ENCODE measurements at regions of chr5 and their contacts with region 1.

Region 1: GRCh38 chr5:132963175-132964104 is at the start of gene AFF4:
- DNase-seq: peak; percentile 95 to 98 (median 97)
- H3K4me3 ChIP-seq: peak within 1 kb of the TSS; percentile 85 to 93 (median 86)
- H3K4me3 Mint-ChIP-seq: peak within 1 kb of the TSS; percentile 90 to 97
- H3K27ac ChIP-seq: peak within 1 kb of the TSS; percentile 97 to 99
- H3K27ac Mint-ChIP-seq: peak within 1 kb of the TSS; percentile 94 to 99 (median 97)
- H3K4me1 ChIP-seq: peaks cover 21 to 28% of the 10 kb centered on the region in 2 donors
- H3K4me1 Mint-ChIP-seq: peaks cover 30% of the 10 kb centered on the region
- H3K27me3 ChIP-seq: no peaks in the 10 kb centered on the region
- H3K27me3 Mint-ChIP-seq: no peaks in the 10 kb centered on the region
- CTCF ChIP-seq: no peak
- polyA plus RNA-seq, gene AFF4: 9.7 to 17.7 (median 17.6) TPM

Region 2: DNA sequence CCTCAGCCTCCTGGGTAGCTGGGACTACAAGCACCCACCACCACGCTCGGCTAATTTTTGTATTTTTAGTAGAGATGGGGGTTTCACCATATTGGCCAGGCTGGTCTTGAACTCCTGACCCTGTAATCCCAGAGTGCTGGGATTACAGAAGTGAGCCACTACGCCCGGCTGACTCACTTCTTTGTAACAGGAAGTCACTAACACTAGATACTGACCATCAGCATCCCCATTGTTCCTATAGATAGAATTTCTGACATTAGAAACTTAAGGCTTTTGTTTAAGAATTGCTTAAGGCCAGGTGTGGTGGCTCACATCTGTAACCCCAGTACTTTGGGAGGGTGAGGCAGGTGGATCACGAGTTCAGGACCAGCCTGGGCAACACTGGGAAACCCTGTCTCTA is 47.8 kb before region 1 on chr5:
- intact Hi-C with region 1: loop called in 1 of 2 experiments (anchors 10 kb)
- DNase-seq: peak; percentile 53 to 55 (median 53)
- H3K4me3 ChIP-seq: no peak overlapping the region
- H3K4me3 Mint-ChIP-seq: no peak overlapping the region
- H3K27ac ChIP-seq: peak overlapping the region in 1 of 2 donors; percentile 1
- H3K27ac Mint-ChIP-seq: peak overlapping the region in 6 of 7 donors; percentile 48 to 82 (median 70)
- H3K4me1 ChIP-seq: peaks cover 3 to 8% of the 10 kb centered on the region in 2 donors
- H3K4me1 Mint-ChIP-seq: peaks cover 10% of the 10 kb centered on the region
- H3K27me3 ChIP-seq: no peaks in the 10 kb centered on the region
- H3K27me3 Mint-ChIP-seq: no peaks in the 10 kb centered on the region
- CTCF ChIP-seq: no peak

Region 3: DNA sequence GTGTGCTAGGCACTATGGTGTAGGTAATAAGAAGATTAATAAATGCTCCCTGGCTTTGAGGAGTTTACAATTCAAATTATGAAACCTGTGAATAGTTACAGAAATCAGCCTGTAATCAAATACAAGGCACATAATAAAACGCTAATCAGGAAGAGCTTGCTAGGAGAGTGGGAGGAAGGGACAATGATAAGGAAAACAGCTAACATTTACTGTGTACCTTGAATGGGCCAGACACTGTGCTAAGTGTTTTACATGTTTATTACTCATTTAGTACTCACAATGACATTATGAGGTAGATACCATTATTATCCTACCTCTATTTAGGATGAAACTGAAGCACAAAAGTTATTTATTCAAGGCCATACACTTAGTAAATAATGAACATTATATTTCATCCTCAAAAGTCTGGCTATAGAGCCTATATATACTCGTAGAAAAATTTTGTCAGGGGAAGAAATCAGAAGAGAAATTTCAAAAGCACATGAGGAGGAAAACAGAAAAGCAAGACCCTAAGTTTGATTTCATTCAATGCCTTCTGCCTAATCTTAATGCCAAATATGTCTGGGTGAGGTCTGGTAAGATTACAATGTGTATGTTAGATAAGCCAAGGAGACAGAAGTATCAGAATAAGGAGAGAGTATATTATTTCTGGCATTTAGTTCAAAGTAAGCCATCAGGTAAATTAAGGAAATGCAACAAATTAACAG is 35.9 kb before region 1 on chr5:
- intact Hi-C with region 1: no loop called
- DNase-seq: no peak
- H3K4me3 ChIP-seq: no peak overlapping the region
- H3K4me3 Mint-ChIP-seq: no peak overlapping the region
- H3K27ac ChIP-seq: no peak overlapping the region
- H3K27ac Mint-ChIP-seq: peak overlapping the region in 1 of 7 donors; percentile 40
- H3K4me1 ChIP-seq: peaks cover 0 to 8% of the 10 kb centered on the region in 2 donors
- H3K4me1 Mint-ChIP-seq: peaks cover 14% of the 10 kb centered on the region
- H3K27me3 ChIP-seq: no peaks in the 10 kb centered on the region
- H3K27me3 Mint-ChIP-seq: no peaks in the 10 kb centered on the region
- CTCF ChIP-seq: no peak

Measured in CD14-positive monocyte (primary cell).